ENCODE measurements at regions of chr11 and their contacts with region 1.

Region 1: DNA sequence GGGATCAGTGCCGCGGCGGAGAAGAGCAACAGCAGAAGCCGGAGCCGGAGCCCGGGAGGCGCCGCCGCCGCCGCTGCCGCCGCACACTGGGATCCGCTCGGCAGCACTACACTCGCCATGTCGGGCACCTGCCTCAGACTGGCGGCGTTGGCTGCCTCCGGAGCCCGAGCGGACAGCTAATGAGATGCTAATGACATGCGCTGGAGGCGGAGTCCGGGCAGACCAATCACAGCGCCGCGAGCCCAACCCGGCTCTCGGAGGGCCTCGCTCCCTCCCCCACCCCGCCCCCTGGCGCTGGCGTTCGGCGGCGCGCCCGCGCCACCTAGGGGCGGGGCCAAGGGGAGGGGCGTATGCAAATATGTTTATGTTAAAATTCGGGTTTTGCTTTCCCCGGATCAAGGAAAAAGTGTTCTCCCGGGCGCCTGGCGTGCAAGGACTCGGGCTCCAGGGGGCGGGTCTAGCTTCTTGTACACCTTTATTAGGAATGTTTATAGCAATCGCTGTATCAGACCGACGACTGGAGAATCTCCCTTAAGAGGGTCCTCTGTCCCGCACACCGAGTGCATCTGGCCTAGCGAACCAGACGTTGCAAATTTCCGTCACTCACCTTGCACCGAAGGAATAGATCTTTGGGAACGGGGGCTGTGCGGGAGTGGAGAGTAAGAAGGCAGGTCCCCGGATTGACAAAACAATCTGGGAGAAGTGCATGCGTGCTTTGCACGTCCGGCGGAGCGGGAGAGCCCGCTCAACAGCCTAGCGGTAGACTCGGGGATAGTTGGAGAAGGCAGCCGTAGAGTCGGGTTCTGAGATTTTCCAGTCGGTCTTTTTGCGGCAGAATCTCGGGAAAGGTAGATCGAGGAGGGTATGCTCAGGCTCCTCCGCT is at the start of gene CADM1:
- DNase-seq: peak; percentile 93 to 97 (median 94)
- ATAC-seq: peak; percentile 93 to 96 (median 94)
- H3K4me3 ChIP-seq: peak within 1 kb of the TSS; percentile 51 to 84 (median 72)
- H3K27ac ChIP-seq: peak within 1 kb of the TSS in 11 of 12 donors; percentile 74 to 90 (median 84)
- H3K4me1 ChIP-seq: peaks cover 0 to 36% (median 13%) of the 10 kb centered on the region in 12 donors
- H3K27me3 ChIP-seq: peaks cover 0 to 85% (median 12%) of the 10 kb centered on the region in 9 donors
- CTCF ChIP-seq: peak; percentile 45 to 85 (median 70)
- POLR2A ChIP-seq: peak; percentile 80 to 97
- total RNA-seq, gene CADM1: 21.0 to 80.2 (median 45.8) TPM

Region 2: DNA sequence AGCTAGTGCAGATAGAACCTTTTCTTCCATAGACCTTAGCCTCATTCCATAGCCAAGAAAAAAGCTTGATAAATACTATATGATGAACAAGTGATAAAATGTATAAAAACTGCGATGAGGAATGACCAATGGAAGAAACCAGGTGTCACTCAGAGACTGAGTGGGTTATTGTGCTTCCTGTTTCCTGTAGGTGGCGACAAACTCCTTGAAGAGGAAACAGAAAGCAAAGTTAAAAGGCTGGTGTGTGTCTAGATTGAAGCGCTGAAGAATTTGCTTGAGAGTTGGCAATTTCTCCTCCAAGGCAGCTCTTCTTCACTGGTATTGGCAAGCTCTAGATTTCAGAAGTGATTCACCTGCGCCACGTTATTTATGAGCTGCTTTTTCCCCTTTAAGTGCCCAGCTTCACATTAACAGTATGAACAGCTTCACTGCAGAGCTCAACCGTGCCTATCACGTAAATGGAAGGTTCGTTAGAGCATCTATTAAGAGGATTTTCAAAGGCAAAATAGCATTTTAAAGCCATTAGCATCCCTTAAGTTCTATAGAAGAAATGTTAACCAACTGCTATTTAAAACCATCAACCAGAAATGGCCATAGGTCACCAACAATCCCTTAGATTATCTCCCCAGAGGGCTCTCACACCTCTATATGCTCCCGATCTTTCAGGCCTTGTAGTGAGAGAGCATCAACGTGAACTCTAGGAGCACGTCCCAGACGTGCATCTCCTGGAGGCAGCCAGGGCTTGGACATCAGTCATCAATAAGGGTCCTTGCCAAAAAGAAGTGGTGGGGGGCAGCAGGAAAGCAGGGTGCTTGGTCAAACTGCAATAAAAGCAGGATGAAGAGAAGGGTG is 179.7 kb before region 1 on chr11:
- intact Hi-C with region 1: loop called in 4 of 10 experiments (anchors 5 to 10 kb)
- DNase-seq: peak in 1 of 5 donors; percentile 20
- ATAC-seq: peak; percentile 61 to 90 (median 78)
- H3K4me3 ChIP-seq: peak overlapping the region in 3 of 12 donors; percentile 8 to 37 (median 14)
- H3K27ac ChIP-seq: no peak overlapping the region
- H3K4me1 ChIP-seq: peaks cover 0 to 8% (median 0%) of the 10 kb centered on the region in 12 donors
- H3K27me3 ChIP-seq: no peaks in the 10 kb centered on the region
- CTCF ChIP-seq: peak; percentile 67 to 85 (median 78)
- POLR2A ChIP-seq: no peak

Region 3: GRCh38 chr11:115606498-115607220 is 102.1 kb after region 1 on chr11:
- intact Hi-C with region 1: loop called in 1 of 10 experiments (anchors 5 kb)
- DNase-seq: peak in 4 of 5 donors; percentile 72 to 84 (median 75)
- ATAC-seq: peak; percentile 63 to 76 (median 72)
- H3K4me3 ChIP-seq: no peak overlapping the region
- H3K27ac ChIP-seq: peak overlapping the region in 10 of 12 donors; percentile 8 to 86 (median 64)
- H3K4me1 ChIP-seq: peaks cover 4 to 26% (median 15%) of the 10 kb centered on the region in 12 donors
- H3K27me3 ChIP-seq: no peaks in the 10 kb centered on the region
- CTCF ChIP-seq: no peak
- POLR2A ChIP-seq: no peak

Region 4: DNA sequence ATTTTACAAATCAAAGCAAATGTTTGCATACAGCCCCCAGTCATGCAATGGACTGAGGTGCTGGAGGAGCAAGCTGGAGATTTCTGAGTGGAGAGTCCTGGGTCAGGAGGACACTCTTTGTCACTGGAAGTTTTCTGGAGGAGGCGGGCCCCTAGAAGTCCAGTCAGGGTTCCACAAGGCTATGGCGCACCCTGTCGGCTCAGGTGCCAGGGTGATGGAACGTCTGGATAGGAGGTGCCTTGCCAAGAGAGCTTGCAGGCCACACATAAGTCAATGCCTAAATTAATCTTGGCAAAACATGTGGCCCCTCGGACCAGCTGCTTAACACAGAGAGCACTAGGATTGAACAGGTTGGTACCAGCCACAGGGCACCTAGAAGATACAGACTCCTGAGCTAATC is 174.4 kb after region 1 on chr11:
- intact Hi-C with region 1: loop called in 5 of 10 experiments (anchors 5 to 10 kb)
- DNase-seq: peak in 2 of 5 donors; percentile 47 to 56
- ATAC-seq: peak; percentile 68 to 87 (median 83)
- H3K4me3 ChIP-seq: no peak overlapping the region
- H3K27ac ChIP-seq: no peak overlapping the region
- H3K4me1 ChIP-seq: peaks cover 0 to 7% (median 0%) of the 10 kb centered on the region in 12 donors
- H3K27me3 ChIP-seq: no peaks in the 10 kb centered on the region
- CTCF ChIP-seq: peak in 7 of 12 donors; percentile 22 to 50 (median 37)
- POLR2A ChIP-seq: no peak